ENCODE measurements at regions of chr6 and their contacts with region 1.

Region 1: GRCh38 chr6:44338228-44339122 is 4.0 kb upstream of the SPATS1 start:
- DNase-seq: peak; percentile 61 to 72
- H3K4me3 ChIP-seq: no peak overlapping the region
- H3K27ac ChIP-seq: peak overlapping the region in 2 of 3 donors; percentile 55 to 67
- H3K4me1 ChIP-seq: peaks cover 0 to 5% of the 10 kb centered on the region in 2 donors
- H3K27me3 ChIP-seq: no peaks in the 10 kb centered on the region
- CTCF ChIP-seq: peak; percentile 28 to 89 (median 76)
- POLR2A ChIP-seq: no peak

Region 2: DNA sequence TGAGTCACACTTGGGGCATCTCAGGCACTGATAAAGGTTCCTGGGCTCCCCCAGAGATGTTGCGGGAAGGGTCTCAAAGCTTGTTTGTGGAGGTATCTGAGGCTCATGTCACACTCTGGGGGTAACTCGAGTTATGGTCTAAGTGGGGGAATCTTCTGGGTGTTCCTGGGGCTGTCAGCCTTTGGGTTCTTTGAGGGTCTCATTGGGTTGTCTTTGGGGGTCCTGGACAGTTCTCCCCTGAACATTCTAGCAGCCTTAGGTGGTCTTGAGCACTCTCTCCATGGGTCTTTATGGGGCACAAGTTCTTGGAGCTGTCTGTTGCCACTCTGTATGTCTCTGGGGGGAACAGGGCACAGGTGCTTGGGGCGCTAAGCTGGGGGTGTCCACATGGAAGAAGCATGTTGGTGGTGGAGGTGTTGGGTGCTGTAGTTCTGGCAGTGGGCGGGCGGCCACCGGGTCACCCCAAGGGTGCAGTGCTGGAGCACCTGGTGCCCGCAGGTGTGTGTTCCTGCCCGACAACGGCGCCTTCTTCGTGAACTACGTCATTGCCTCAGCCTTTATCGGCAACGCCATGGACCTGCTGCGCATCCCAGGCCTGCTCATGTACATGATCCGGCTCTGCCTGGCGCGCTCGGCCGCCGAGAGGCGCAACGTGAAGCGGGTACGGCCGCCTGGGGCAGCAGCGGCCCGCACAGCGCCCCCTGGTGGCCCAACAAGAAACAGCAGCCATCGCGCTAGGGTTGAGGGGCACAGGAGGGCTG is 186.9 kb before region 1 on chr6:
- intact Hi-C with region 1: loop called (anchors 10 kb)
- DNase-seq: peak; percentile 73 to 76
- H3K4me3 ChIP-seq: no peak overlapping the region
- H3K27ac ChIP-seq: no peak overlapping the region
- H3K4me1 ChIP-seq: peaks cover 0 to 4% of the 10 kb centered on the region in 2 donors
- H3K27me3 ChIP-seq: no peaks in the 10 kb centered on the region
- CTCF ChIP-seq: peak; percentile 91 to 99 (median 98)
- POLR2A ChIP-seq: no peak

Region 3: DNA sequence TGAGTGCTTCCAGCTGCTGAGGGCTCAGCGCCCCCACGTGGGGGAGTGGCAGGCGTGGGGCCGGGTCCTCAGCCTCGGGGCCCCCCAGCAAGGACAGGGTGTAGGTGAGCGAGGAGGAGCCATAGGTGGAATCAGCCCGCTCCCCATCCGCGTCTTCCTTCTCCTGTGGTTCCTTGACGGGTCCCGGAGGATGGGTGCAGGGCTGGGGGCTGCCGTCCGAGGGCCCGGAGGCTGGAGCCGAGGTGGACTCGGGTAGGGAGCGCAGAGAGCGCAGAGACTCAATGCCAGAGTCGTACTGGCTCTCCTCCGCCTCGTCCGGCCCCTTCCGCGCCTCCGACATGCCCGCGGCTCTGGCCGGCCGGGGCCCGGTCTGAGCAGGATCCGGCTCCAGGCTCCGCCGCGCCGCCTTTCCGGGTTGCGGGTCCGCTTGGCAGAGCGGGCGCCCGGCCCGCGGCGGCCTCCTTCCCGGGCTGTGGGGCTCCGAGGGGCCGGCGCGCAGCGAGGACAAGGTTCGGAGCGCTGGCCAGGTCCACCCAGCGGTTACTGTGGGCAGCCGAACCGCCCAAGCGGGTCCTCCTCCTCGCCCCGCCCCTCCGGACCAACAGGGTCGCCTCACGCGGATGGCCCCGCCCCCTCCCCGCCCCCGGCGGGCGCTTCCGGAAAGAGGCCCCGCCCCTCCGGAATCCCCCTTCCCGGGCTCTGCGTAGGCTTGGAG is 73.3 kb before region 1 on chr6 and contains the start of gene NFKBIE:
- intact Hi-C with region 1: loop called (anchors 2 kb)
- DNase-seq: peak; percentile 98 to 99
- H3K4me3 ChIP-seq: peak within 1 kb of the TSS; percentile 77 to 83 (median 82)
- H3K27ac ChIP-seq: peak within 1 kb of the TSS; percentile 60 to 90 (median 81)
- H3K4me1 ChIP-seq: peaks cover 27 to 30% of the 10 kb centered on the region in 2 donors
- H3K27me3 ChIP-seq: no peaks in the 10 kb centered on the region
- CTCF ChIP-seq: peak in 3 of 6 experiments; percentile 20 to 25 (median 21)
- POLR2A ChIP-seq: peak; percentile 76 to 91
- total RNA-seq, gene NFKBIE: 5.1 to 16.9 (median 13.2) TPM

Measured in thyroid gland (tissue), 4 donors.